Adrenal gland (tissue), 19 donors: ENCODE measurements at regions of chr15 and their contacts with region 1.

Region 1: GRCh38 chr15:74307827-74308644 is 59.4 kb downstream of the CYP11A1 start:
- DNase-seq: peak; percentile 55 to 83 (median 73)
- H3K4me3 ChIP-seq: no peak overlapping the region
- H3K27ac ChIP-seq: no peak overlapping the region
- H3K4me1 ChIP-seq: peaks cover 0 to under 1% of the 10 kb centered on the region in 2 donors
- H3K27me3 ChIP-seq: peaks cover 5% of the 10 kb centered on the region
- CTCF ChIP-seq: peak; percentile 54 to 76 (median 68)
- POLR2A ChIP-seq: no peak

Region 2: GRCh38 chr15:73972984-73973682 is 334.9 kb before region 1 on chr15:
- intact Hi-C with region 1: loop called in 1 of 2 experiments (anchors 5 kb)
- DNase-seq: peak; percentile 83 to 94 (median 89)
- H3K4me3 ChIP-seq: peak overlapping the region in 2 of 4 donors; percentile 7 to 22
- H3K27ac ChIP-seq: no peak overlapping the region
- H3K4me1 ChIP-seq: peaks cover 4 to 5% of the 10 kb centered on the region in 2 donors
- H3K27me3 ChIP-seq: no peaks in the 10 kb centered on the region
- CTCF ChIP-seq: peak; percentile 78 to 95 (median 88)
- POLR2A ChIP-seq: no peak

Region 3: DNA sequence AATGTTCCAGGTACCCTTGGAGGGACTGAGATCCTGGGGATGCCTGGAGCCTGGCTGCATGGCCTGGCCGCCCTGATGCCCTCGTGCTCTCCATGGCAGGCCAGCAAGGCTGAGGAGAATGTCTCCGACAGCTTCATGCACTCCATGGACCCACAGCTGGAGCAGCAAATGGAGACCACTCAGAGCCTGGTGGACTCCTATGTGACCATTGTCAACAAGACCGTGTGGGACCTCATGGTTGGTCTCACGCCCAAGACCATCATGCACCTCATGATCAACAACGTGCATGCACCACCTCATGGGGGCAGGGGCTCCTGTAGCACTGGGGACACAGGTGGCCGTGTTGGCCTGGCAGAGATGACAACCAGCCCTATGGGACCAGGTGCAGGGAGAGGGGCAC is 245.4 kb before region 1 on chr15:
- intact Hi-C with region 1: loop called in 1 of 2 experiments (anchors 5 kb)
- DNase-seq: peak in 1 of 7 donors; percentile 11
- H3K4me3 ChIP-seq: no peak overlapping the region
- H3K27ac ChIP-seq: no peak overlapping the region
- H3K4me1 ChIP-seq: no peaks in the 10 kb centered on the region
- H3K27me3 ChIP-seq: no peaks in the 10 kb centered on the region
- CTCF ChIP-seq: no peak
- POLR2A ChIP-seq: no peak

Region 4: DNA sequence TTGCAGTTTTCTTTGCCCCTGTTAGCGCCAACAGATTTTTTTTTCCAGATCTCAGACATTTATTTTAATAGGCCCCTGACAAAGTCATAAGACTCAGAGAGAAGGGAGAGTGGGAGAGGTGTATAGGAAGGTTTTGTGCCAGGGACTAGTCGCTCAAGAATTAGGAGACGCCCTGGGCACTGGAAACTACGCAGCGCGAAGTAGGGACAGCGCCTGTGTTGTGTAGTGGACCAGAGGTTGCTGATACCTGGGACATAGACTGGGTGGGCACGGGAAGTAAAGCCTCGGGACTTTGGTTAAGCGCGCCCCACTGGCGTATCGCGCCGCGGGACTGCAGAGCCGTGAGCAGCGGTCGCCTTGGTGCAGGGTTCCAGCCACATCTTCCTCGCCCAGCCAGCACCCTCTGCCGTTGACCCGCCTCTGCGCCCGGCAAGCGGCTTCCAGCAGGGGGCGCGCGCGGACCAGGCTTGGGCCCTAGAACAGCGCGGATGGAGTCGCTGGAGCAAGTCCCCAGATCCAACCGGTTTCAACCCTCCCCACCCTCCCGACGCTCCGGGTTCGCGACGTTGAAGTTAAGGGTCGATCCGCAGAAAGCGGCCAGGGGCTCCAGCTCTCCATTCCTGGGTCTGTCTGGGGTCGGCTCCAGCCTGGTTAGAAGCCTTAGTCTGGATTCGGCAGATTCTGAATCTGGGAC is 180.6 kb before region 1 on chr15:
- intact Hi-C with region 1: loop called (anchors 5 kb)
- DNase-seq: peak; percentile 82 to 94 (median 92)
- H3K4me3 ChIP-seq: peak overlapping the region in 1 of 4 donors; percentile 45
- H3K27ac ChIP-seq: no peak overlapping the region
- H3K4me1 ChIP-seq: peaks cover 0 to 11% of the 10 kb centered on the region in 2 donors
- H3K27me3 ChIP-seq: peaks cover 50% of the 10 kb centered on the region
- CTCF ChIP-seq: peak; percentile 89 to 99 (median 98)
- POLR2A ChIP-seq: no peak